AG04449 (cell line): ENCODE measurements at regions of chr1 and their contacts with region 1.

Region 1: GRCh38 chr1:205396967-205397616 is 24.8 kb downstream of the LEMD1 start:
- DNase-seq: no peak
- H3K4me3 ChIP-seq: no peak overlapping the region
- CTCF ChIP-seq: peak; percentile 35

Region 2: DNA sequence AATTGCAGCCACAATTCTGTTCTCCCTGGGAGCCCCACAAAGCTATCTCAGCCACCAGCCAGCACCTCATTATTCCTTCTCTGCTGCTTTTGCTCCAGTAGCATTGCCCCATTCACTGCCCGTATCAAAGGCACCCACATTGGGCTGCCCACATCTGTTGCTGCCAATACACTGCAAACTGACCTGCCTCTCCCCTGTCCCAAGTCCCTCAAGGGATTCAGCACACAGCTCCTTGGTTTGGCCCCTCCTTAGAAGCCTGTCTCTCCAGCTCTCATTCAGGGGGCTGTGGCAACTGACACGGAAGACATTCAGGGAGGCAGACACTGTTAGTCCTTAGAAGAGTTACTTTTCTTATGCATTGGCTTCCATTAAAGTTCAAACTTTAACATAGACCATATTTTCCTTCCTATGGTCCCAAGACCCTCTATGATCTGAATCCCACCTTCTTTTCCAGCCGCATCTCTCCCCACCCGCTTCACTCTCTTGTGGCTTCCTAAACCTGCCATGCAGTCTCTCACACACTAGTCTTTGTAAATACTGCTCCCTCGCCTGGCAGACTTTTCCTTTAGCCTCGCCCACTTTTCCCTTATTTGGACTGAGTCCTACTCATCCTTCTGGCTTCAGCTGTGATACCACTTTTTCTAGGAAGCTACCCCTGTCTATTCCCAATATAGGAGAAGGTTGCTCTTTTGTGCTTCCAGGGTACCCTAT is 21.1 kb before region 1 on chr1:
- CTCF ChIA-PET with region 1: interaction called, 61 read pairs
- POLR2A ChIA-PET with region 1: no interaction called
- DNase-seq: no peak
- H3K4me3 ChIP-seq: no peak overlapping the region
- CTCF ChIP-seq: peak; percentile 9

Region 3: DNA sequence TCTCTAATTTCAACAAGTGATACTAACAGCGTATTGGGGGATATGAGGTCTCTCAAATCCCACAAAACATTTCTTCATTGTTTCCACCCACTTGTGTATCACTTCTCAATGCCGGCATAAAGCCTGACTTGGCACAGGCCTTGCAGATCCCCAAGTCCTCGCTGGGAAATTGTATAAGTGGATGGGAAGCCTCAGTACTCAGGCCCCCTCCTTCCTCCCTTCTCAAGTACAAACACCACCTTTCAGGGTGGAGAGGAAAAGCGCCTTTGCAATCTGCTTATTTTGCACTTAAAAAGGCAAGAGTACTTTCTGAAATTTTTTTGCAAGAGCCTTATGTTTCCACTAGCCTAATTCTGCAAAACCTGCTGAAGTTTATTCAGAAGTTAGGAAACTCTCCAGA is 14.5 kb before region 1 on chr1:
- CTCF ChIA-PET with region 1: interaction called, 61 read pairs
- POLR2A ChIA-PET with region 1: no interaction called
- DNase-seq: no peak
- H3K4me3 ChIP-seq: no peak overlapping the region
- CTCF ChIP-seq: no peak

Region 4: GRCh38 chr1:205410581-205411298 is 13.6 kb after region 1 on chr1:
- CTCF ChIA-PET with region 1: interaction called, 22 read pairs
- POLR2A ChIA-PET with region 1: no interaction called
- DNase-seq: no peak
- H3K4me3 ChIP-seq: no peak overlapping the region
- CTCF ChIP-seq: no peak

Region 5: GRCh38 chr1:205430696-205431305 is 33.7 kb after region 1 on chr1:
- CTCF ChIA-PET with region 1: interaction called, 11 read pairs
- POLR2A ChIA-PET with region 1: no interaction called
- DNase-seq: no peak
- H3K4me3 ChIP-seq: peak overlapping the region; percentile 56
- CTCF ChIP-seq: peak; percentile 82